Adrenal gland (tissue), 19 donors: ENCODE measurements at regions of chr3 and their contacts with region 1.

Region 1: DNA sequence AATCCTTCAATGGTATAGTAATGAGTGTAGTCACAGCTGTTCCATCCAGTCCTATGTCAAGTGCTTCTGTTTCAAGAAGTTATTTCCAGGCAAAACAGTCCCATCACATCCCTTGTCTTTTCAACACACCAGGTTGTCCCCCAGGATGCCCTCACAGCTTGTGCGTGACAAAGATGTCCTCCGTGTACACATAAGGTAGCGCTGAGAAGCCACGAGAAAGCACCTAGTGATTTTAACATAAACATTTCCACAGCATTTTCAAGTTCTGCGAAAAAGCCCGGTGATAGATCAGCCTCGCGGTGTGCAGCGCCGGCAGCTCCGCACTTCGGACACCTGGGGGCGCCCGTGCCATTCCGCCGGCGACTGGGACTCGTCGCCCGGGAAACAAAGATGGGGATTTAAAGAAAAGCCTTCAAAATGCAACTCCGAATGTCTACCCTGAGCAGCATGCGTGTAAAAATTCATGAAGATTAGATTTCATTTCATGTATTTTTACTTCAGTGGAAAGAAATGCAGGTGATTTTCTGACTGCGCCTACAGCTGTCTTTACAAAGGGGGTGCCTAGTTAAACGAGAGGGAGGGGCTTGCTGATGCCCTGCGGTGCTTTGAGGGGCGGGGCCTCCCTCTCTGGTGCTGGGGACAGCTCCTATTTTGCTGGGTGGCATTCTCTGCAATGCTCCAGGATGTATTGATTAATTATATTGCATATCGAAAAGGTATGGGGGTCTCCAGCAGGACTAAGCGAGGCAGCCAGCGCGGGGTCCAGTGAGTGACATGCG is 49.9 kb downstream of the KY start:
- DNase-seq: peak; percentile 51 to 80 (median 71)
- H3K4me3 ChIP-seq: peak overlapping the region in 1 of 4 donors; percentile 28
- H3K27ac ChIP-seq: peak overlapping the region in 1 of 5 donors; percentile 0
- H3K4me1 ChIP-seq: peaks cover 0 to 21% of the 10 kb centered on the region in 2 donors
- H3K27me3 ChIP-seq: no peaks in the 10 kb centered on the region
- CTCF ChIP-seq: peak; percentile 77 to 98 (median 90)
- POLR2A ChIP-seq: no peak

Region 2: GRCh38 chr3:134677196-134677986 is 76.5 kb after region 1 on chr3:
- intact Hi-C with region 1: loop called (anchors 5 kb)
- DNase-seq: peak; percentile 27 to 65 (median 40)
- H3K4me3 ChIP-seq: no peak overlapping the region
- H3K27ac ChIP-seq: no peak overlapping the region
- H3K4me1 ChIP-seq: no peaks in the 10 kb centered on the region
- H3K27me3 ChIP-seq: no peaks in the 10 kb centered on the region
- CTCF ChIP-seq: peak; percentile 47 to 78 (median 64)
- POLR2A ChIP-seq: no peak

Region 3: GRCh38 chr3:134754768-134755559 is 154.1 kb after region 1 on chr3:
- intact Hi-C with region 1: loop called in 1 of 2 experiments (anchors 10 kb)
- DNase-seq: peak; percentile 18 to 79 (median 43)
- H3K4me3 ChIP-seq: no peak overlapping the region
- H3K27ac ChIP-seq: no peak overlapping the region
- H3K4me1 ChIP-seq: no peaks in the 10 kb centered on the region
- H3K27me3 ChIP-seq: no peaks in the 10 kb centered on the region
- CTCF ChIP-seq: peak; percentile 27 to 57 (median 48)
- POLR2A ChIP-seq: no peak

Region 4: GRCh38 chr3:135491491-135492205 is 890.8 kb after region 1 on chr3:
- intact Hi-C with region 1: loop called in 1 of 2 experiments (anchors 10 kb)
- DNase-seq: no peak
- H3K4me3 ChIP-seq: no peak overlapping the region
- H3K27ac ChIP-seq: no peak overlapping the region
- H3K4me1 ChIP-seq: no peaks in the 10 kb centered on the region
- H3K27me3 ChIP-seq: peaks cover 5% of the 10 kb centered on the region
- CTCF ChIP-seq: no peak
- POLR2A ChIP-seq: no peak

Region 5: GRCh38 chr3:135895106-135895733 is 1294.3 kb after region 1 on chr3:
- intact Hi-C with region 1: loop called in 1 of 2 experiments (anchors 5 kb)
- DNase-seq: peak; percentile 74 to 94 (median 83)
- H3K4me3 ChIP-seq: no peak overlapping the region
- H3K27ac ChIP-seq: no peak overlapping the region
- H3K4me1 ChIP-seq: no peaks in the 10 kb centered on the region
- H3K27me3 ChIP-seq: no peaks in the 10 kb centered on the region
- CTCF ChIP-seq: peak; percentile 70 to 88 (median 84)
- POLR2A ChIP-seq: no peak